Panc1 (cell line): ENCODE measurements at regions of chr13 and their contacts with region 1.

Region 1: DNA sequence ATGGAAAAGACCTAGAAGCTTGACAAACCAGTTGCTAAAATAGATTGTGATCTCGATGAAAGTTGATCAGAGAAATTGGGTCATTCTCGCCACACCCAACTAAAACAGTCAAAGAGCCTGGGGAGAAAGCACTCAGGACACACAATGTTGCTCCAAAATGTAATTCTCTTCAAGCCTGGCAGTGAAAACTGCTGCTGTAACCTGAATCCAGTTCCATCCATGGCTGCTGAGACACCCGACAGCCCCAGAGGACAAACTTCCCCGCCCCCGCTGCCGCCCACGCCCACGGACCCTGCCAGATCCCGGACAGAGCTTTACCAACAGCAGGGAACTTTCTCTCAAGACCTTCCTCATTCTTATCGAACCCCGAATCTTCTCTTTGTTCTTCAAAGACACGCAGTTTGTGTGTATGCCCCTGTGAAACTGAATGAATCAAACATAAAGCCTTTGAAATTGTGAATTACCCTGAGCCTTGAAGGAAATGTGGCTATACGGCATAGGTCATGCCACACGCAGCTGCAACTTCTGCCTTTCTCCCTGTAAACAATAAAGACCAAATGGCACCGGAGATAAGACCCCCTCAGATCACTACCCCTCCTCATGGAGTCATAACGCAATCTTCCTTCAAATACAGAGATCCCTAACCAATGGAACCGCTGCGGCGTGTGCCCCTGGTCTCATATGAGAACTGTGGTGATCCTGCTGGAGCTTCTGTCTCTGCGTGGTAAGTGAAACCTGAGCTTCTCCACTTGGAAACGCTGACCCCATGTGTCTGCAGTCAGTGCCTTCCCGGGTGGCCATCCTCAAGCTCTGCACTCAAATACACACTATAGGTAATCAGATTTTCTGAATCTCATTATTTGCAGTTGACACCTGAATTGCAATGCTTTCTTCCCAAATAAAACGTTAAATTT is 4.8 kb upstream of the LAMP1 start:
- DNase-seq: no peak
- ATAC-seq: no peak
- H3K4me3 ChIP-seq: peak overlapping the region; percentile 30 to 44
- H3K27ac ChIP-seq: no peak overlapping the region
- H3K4me1 ChIP-seq: no peaks in the 10 kb centered on the region; the same call in none of the 2 replicates
- H3K27me3 ChIP-seq: no peaks in the 10 kb centered on the region; the same call in 1 of the 2 replicates
- CTCF ChIP-seq: no peak

Region 2: DNA sequence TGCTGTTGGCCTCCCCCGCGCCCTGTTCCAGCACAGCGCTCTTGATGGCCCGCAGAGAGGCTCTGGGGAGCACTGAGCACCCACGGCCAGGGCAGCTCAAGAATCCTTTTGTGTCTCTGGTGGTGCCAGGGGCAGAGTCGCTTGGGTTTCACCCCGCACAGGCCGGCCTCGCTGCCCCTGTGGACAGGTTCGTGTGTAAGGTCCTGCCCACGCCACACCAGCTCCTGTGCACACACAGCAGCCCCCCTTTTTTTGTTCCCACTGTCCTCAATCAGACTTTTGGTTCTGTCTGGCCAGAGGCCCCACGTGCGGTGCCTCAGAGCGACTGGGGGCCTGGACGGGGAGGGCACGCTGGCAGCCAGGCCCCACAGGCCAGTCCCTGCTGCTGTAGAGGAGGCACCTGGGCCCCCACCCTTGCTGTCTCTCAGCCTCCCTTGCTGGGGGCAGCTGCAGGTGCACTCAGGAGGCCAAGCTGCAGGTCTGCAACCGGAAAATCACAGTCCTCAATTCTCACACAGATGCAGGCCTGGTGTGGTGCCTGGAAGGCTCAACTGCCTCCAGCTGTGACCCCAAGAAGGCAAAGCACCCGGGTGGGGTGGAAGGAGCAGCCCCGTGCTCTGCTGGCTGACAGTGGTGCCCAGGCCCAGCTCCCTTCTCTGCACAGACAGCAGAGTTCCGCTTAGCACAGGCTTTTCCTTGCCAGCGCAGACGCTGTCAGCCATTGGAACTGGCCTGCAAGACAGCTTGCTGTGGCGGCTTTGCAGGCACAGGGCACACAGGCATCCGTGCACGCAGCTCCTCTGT is 199.2 kb before region 1 on chr13:
- CTCF ChIA-PET with region 1: no interaction called
- POLR2A ChIA-PET with region 1: interaction called, 13 read pairs
- in situ Hi-C with region 1: no loop called
- intact Hi-C with region 1: no loop called
- DNase-seq: no peak
- ATAC-seq: no peak
- H3K4me3 ChIP-seq: no peak overlapping the region
- H3K27ac ChIP-seq: no peak overlapping the region
- H3K4me1 ChIP-seq: no peaks in the 10 kb centered on the region
- H3K27me3 ChIP-seq: no peaks in the 10 kb centered on the region
- CTCF ChIP-seq: no peak

Region 3: GRCh38 chr13:113387396-113387795 is 95.2 kb after region 1 on chr13:
- CTCF ChIA-PET with region 1: no interaction called
- POLR2A ChIA-PET with region 1: no interaction called
- in situ Hi-C with region 1: no loop called
- intact Hi-C with region 1: no loop called
- DNase-seq: no peak
- ATAC-seq: no peak
- H3K4me3 ChIP-seq: no peak overlapping the region
- H3K27ac ChIP-seq: no peak overlapping the region
- H3K4me1 ChIP-seq: no peaks in the 10 kb centered on the region
- H3K27me3 ChIP-seq: no peaks in the 10 kb centered on the region
- CTCF ChIP-seq: no peak